ENCODE measurements at regions of chr3 and their contacts with region 1.

Region 1: GRCh38 chr3:184513276-184514170 is 48.1 kb upstream of the EPHB3 start:
- DNase-seq: peak; percentile 56 to 85
- H3K4me3 ChIP-seq: no peak overlapping the region
- H3K27ac ChIP-seq: no peak overlapping the region
- H3K4me1 ChIP-seq: no peaks in the 10 kb centered on the region
- H3K27me3 ChIP-seq: peaks cover 93% of the 10 kb centered on the region
- CTCF ChIP-seq: peak; percentile 94

Region 2: DNA sequence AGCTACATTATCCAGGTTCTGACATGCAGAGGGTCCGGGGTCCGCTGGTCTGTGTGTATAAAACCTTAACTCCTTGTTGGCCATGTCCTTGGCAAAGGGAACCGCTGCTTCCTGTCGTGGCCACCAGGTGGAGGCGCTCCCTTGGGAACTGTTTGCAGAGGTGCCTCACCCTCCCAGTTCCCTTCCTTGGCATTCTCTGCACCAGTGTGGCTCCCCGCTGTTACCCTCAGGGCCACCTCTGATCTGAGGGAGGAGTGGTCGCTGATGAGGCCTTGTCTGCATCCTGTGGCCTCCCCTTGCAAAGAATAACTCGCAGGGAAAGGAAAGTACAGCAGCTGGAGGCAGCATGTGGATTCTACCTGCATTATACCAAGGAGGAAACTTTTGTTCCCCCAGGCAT is 44.1 kb before region 1 on chr3:
- CTCF ChIA-PET with region 1: interaction called, 5 read pairs
- POLR2A ChIA-PET with region 1: interaction called, 5 read pairs
- intact Hi-C with region 1: loop called (anchors 5 kb)
- DNase-seq: peak in 1 of 2 experiments; percentile 56
- H3K4me3 ChIP-seq: no peak overlapping the region
- H3K27ac ChIP-seq: no peak overlapping the region
- H3K4me1 ChIP-seq: no peaks in the 10 kb centered on the region
- H3K27me3 ChIP-seq: peaks cover 35% of the 10 kb centered on the region
- CTCF ChIP-seq: peak; percentile 90

Measured in PC-9 (cell line).